Activated naive CD4-positive, alpha-beta T cell treated with anti-CD3 and anti-CD28 coated beads for 36 hours (primary cell): ENCODE measurements at regions of chr17 and their contacts with region 1.

Region 1: GRCh38 chr17:61361084-61361483 is 38.6 kb upstream of the TBX2 start:
- DNase-seq: no peak
- H3K4me3 Mint-ChIP-seq: no peak overlapping the region
- H3K27ac Mint-ChIP-seq: no peak overlapping the region
- H3K4me1 Mint-ChIP-seq: no peaks in the 10 kb centered on the region
- H3K27me3 Mint-ChIP-seq: no peaks in the 10 kb centered on the region

Region 2: GRCh38 chr17:61002316-61002736 is 358.8 kb before region 1 on chr17:
- CTCF ChIA-PET with region 1: interaction called, 3 read pairs
- intact Hi-C with region 1: loop called (anchors 1 kb)
- DNase-seq: no peak
- H3K4me3 Mint-ChIP-seq: no peak overlapping the region
- H3K27ac Mint-ChIP-seq: no peak overlapping the region
- H3K4me1 Mint-ChIP-seq: no peaks in the 10 kb centered on the region
- H3K27me3 Mint-ChIP-seq: no peaks in the 10 kb centered on the region

Region 3: DNA sequence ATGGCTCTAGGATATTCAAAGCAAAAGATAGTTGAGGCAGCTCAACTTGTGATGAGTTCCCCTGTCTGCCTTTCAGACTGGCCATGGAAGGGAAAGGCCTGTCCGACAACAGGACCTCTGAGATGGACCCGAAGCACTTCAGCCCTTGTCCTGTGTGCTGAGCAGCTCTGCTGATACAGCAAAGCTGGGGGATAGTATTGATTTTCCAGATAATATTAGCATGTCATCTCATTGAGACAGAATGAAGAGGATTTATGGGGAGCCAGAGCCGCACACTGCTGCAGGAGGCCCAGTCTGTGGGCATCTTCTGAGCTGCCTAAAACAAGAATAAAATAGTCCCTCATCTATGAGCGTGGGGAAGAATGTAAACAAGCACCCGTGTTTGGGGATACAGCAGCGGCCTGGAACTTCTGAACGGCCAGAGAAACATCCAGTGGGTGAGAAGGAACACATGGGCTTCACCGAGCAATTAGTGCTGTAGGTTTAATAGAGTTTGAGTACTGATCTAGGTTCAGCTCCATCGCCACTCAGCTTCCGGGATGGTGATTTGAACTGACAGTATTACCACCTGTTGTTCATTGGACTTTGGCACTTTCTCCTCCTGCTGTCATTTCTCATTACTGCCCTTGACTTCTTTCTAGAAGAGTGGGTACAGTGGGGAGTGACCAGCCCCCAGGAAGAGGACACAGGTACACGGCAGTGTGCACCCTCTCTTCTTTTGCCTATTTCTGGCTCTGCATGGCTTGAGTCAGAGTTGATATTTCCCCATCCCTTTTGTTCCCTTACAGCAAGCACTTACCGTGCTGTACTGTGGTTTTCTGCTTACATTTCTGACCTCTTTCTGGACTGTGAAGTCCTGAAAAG is 57.9 kb before region 1 on chr17:
- CTCF ChIA-PET with region 1: no interaction called
- intact Hi-C with region 1: no loop called
- DNase-seq: no peak
- H3K4me3 Mint-ChIP-seq: no peak overlapping the region
- H3K27ac Mint-ChIP-seq: no peak overlapping the region
- H3K4me1 Mint-ChIP-seq: no peaks in the 10 kb centered on the region
- H3K27me3 Mint-ChIP-seq: no peaks in the 10 kb centered on the region

Region 4: GRCh38 chr17:61325382-61326073 is 35.6 kb before region 1 on chr17:
- CTCF ChIA-PET with region 1: no interaction called
- intact Hi-C with region 1: no loop called
- DNase-seq: no peak
- H3K4me3 Mint-ChIP-seq: no peak overlapping the region
- H3K27ac Mint-ChIP-seq: no peak overlapping the region
- H3K4me1 Mint-ChIP-seq: no peaks in the 10 kb centered on the region
- H3K27me3 Mint-ChIP-seq: no peaks in the 10 kb centered on the region

Region 5: DNA sequence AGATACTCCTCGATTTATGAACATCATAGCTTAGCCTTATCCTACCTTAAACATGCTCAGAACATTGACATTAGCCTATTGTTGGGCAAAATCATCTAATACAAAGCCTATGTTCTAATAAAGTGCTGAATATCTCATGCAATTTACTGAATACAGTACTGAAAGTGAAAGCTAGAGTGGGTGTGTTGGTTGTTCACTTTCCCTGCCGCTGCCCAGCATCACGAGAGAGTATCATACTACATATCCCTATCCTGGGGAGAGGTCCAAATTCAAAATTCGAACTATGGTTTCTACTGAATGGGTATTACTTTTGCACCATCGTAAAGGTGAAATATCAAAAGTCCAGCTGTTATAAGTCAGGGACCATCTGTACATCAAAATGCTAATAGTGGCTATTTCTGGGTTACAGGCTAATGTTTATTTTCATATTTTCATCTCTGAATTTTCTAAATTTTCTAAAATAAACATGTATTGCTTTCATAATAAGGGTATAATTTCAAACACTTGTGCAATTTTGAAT is 175.4 kb after region 1 on chr17:
- CTCF ChIA-PET with region 1: no interaction called
- intact Hi-C with region 1: no loop called
- DNase-seq: no peak
- H3K4me3 Mint-ChIP-seq: no peak overlapping the region
- H3K27ac Mint-ChIP-seq: no peak overlapping the region
- H3K4me1 Mint-ChIP-seq: peaks cover 2% of the 10 kb centered on the region
- H3K27me3 Mint-ChIP-seq: peaks cover 7% of the 10 kb centered on the region

Region 6: DNA sequence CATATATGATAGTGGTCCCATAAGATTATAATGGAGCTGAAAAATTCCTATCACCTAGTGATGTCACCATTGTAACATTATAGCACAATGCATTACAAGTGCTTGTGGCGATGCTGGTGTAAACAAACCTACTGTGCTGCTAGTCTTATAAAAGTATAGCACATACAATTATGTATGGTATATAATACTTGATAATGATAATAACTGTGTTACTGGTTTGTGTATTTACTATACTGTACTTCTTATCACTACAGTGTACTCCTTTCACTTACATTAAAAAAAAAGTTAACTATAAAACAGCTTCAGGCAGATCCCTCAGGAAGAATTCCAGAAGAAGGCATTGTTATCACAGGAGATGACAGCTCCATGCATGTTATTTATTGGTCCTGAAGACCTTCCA is 352.0 kb after region 1 on chr17:
- CTCF ChIA-PET with region 1: no interaction called
- intact Hi-C with region 1: no loop called
- DNase-seq: no peak
- H3K4me3 Mint-ChIP-seq: no peak overlapping the region
- H3K27ac Mint-ChIP-seq: no peak overlapping the region
- H3K4me1 Mint-ChIP-seq: no peaks in the 10 kb centered on the region
- H3K27me3 Mint-ChIP-seq: no peaks in the 10 kb centered on the region